Transverse colon (tissue), 4 donors: ENCODE measurements at regions of chr22 and their contacts with region 1.

Region 1: DNA sequence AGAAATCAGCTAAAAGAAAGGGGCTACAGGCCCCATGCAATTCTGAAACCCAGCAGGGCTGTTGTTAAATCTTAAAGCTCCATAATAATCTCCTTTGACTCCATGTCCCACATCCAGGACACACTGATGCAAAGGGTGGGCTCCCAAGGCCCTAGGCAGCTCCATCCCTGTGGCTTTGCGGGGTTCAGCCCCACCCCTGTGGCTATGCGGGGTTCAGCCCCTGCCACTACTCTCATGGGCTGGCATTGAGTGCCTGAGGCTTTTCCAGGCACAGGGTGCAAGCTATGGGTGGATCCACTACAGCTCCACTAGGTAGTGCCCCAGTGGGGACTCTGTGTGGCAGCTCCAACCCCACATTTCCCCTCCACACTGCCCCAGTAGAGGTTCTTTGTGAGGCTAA is 8.7 kb upstream of the ZNF280A start:
- DNase-seq: no peak
- H3K4me3 ChIP-seq: no peak overlapping the region
- H3K27ac ChIP-seq: no peak overlapping the region
- H3K4me1 ChIP-seq: no peaks in the 10 kb centered on the region
- H3K27me3 ChIP-seq: no peaks in the 10 kb centered on the region
- CTCF ChIP-seq: no peak
- EP300 ChIP-seq: no peak
- POLR2A ChIP-seq: no peak

Region 2: DNA sequence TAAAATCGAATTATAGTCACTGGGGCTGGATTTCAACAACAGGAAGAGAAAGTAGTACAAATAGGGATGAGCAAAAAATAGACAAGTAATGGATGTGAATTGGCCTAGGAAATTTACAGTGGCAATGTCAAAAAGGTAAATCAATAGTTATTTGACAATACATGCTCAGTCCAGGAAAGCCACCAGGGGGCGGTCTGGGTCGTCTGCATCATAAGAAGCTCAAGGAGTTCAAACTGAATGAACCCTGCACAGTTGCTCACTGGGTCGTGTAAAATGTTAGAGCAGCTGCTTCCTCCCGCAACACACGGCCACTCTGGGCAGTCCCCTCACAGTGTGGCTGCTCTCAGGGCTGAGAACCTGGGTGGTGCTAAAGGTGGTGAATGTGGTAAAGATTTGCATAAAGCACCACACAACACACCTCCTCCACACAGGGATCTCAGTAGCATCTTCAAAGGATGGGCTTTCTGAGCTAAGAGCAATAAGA is 106.1 kb before region 1 on chr22:
- in situ Hi-C with region 1: no loop called
- intact Hi-C with region 1: no loop called
- DNase-seq: peak; percentile 79
- H3K4me3 ChIP-seq: no peak overlapping the region
- H3K27ac ChIP-seq: no peak overlapping the region
- H3K4me1 ChIP-seq: no peaks in the 10 kb centered on the region
- H3K27me3 ChIP-seq: peaks cover 48% of the 10 kb centered on the region
- CTCF ChIP-seq: peak; percentile 29 to 75 (median 62)
- EP300 ChIP-seq: no peak
- POLR2A ChIP-seq: no peak

Region 3: DNA sequence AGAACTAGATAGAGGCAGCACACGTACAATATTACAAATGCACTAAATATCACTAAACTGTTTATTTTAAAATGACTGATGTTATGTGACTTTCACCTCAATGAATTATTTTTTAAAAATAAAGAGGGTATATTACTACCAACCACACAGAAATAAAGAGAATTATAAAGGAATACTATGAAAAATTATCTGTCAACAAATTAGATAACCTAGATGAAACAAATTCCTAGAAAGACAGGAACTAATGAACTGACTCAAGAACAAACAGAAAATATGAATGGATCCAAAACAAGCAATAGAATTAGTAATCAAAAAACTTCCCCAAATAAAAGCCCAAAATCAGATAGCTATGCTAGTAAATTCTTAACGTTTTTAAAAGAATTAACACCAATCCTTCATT is 30.5 kb before region 1 on chr22:
- in situ Hi-C with region 1: no loop called
- intact Hi-C with region 1: loop called (anchors 1 kb)
- DNase-seq: no peak
- H3K4me3 ChIP-seq: no peak overlapping the region
- H3K27ac ChIP-seq: no peak overlapping the region
- H3K4me1 ChIP-seq: no peaks in the 10 kb centered on the region
- H3K27me3 ChIP-seq: no peaks in the 10 kb centered on the region
- CTCF ChIP-seq: no peak
- EP300 ChIP-seq: no peak
- POLR2A ChIP-seq: no peak